ENCODE measurements at regions of chr2 and their contacts with region 1.

Region 1: GRCh38 chr2:151999053-151999452 is 99.8 kb downstream of the CACNB4 start:
- DNase-seq: peak; percentile 56
- ATAC-seq: peak; percentile 96
- H3K4me3 ChIP-seq: no peak overlapping the region
- H3K27ac ChIP-seq: no peak overlapping the region
- H3K4me1 ChIP-seq: no peaks in the 10 kb centered on the region
- H3K27me3 ChIP-seq: peaks cover 11% of the 10 kb centered on the region
- CTCF ChIP-seq: peak; percentile 86

Region 2: GRCh38 chr2:151638191-151638933 is 360.7 kb before region 1 on chr2:
- CTCF ChIA-PET with region 1: no interaction called
- POLR2A ChIA-PET with region 1: no interaction called
- intact Hi-C with region 1: no loop called
- DNase-seq: peak; percentile 12
- ATAC-seq: peak; percentile 51
- H3K4me3 ChIP-seq: peak overlapping the region; percentile 37; the same call in 1 of the 2 replicates
- H3K27ac ChIP-seq: no peak overlapping the region
- H3K4me1 ChIP-seq: peaks cover 6% of the 10 kb centered on the region; the same call in 1 of the 2 replicates
- H3K27me3 ChIP-seq: 0 out of 2 replicates have a peak, but pooled peaks cover 4% of the 10 kb centered on the region
- CTCF ChIP-seq: no peak

Region 3: DNA sequence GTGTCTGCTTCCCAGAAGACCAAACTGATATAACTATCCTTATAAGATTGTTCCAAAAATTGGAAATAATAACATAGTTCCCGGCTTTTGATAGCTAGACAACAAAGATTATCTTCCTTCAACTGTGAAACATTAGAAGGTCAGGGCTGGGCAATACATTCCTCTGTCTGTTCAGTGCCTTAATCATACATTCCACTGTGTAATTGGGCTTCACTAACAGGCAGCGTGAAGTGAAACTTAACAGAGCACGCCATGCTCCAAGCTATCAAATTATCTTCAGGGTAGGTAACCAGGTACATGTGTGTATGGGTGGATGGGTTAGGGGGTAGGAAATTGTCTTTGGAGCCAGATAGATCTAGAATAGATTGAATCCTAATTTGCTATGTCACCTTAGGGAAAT is 147.3 kb before region 1 on chr2:
- CTCF ChIA-PET with region 1: no interaction called
- POLR2A ChIA-PET with region 1: no interaction called
- intact Hi-C with region 1: no loop called
- DNase-seq: peak; percentile 19
- ATAC-seq: peak; percentile 42; the same call in 1 of the 2 replicates
- H3K4me3 ChIP-seq: no peak overlapping the region
- H3K27ac ChIP-seq: no peak overlapping the region
- H3K4me1 ChIP-seq: no peaks in the 10 kb centered on the region
- H3K27me3 ChIP-seq: peaks cover 41% of the 10 kb centered on the region
- CTCF ChIP-seq: no peak

Region 4: GRCh38 chr2:152012697-152013096 is 13.6 kb after region 1 on chr2:
- CTCF ChIA-PET with region 1: no interaction called
- POLR2A ChIA-PET with region 1: no interaction called
- intact Hi-C with region 1: no loop called
- DNase-seq: peak; percentile 25
- ATAC-seq: peak; percentile 54
- H3K4me3 ChIP-seq: no peak overlapping the region
- H3K27ac ChIP-seq: no peak overlapping the region
- H3K4me1 ChIP-seq: no peaks in the 10 kb centered on the region
- H3K27me3 ChIP-seq: peaks cover 32% of the 10 kb centered on the region
- CTCF ChIP-seq: no peak

Region 5: DNA sequence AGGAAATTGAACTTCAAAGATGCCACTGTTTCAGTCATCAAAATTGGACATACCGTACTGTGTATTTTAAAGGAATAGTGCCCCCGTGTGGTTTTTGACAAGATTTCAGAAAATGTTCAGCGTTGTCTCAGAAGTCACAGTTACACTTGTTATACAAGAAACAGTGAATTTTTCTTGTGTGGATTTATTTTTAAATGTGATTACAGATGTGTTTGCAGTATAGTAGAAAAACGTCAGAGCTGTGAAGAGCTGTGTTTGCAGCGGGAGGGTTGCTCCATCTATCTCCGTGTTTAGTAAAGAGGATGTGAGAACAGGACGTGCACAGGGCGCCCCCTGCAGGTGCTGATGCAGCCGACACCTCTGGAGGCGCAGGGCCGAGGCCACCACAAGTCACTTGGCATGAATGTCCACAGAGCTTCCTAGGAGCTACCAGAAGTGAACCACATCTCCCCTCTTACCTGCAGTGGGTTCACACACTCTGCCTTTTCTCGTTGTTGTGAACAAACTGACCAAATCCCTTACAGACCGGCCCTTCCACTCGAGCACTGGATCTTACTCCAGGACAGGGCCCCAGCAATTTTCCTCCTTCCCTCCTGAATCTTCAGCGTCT is 26.7 kb after region 1 on chr2:
- CTCF ChIA-PET with region 1: interaction called, 6 read pairs
- POLR2A ChIA-PET with region 1: no interaction called
- intact Hi-C with region 1: loop called (anchors 1 kb)
- DNase-seq: peak; percentile 79
- ATAC-seq: peak; percentile 94
- H3K4me3 ChIP-seq: peak overlapping the region; percentile 54; the same call in 1 of the 2 replicates
- H3K27ac ChIP-seq: no peak overlapping the region
- H3K4me1 ChIP-seq: 0 out of 2 replicates have a peak, but pooled peaks cover 3% of the 10 kb centered on the region
- H3K27me3 ChIP-seq: peaks cover 27% of the 10 kb centered on the region; the same call in 1 of the 2 replicates
- CTCF ChIP-seq: peak; percentile 100

Region 6: GRCh38 chr2:152134488-152135280 is 135.6 kb after region 1 on chr2:
- CTCF ChIA-PET with region 1: no interaction called
- POLR2A ChIA-PET with region 1: no interaction called
- intact Hi-C with region 1: no loop called
- DNase-seq: no peak
- ATAC-seq: no peak; the same call in 1 of the 2 replicates
- H3K4me3 ChIP-seq: no peak overlapping the region
- H3K27ac ChIP-seq: no peak overlapping the region
- H3K4me1 ChIP-seq: no peaks in the 10 kb centered on the region
- H3K27me3 ChIP-seq: no peaks in the 10 kb centered on the region
- CTCF ChIP-seq: no peak

Measured in PC-3 (cell line).